ENCODE measurements at regions of chr7 and their contacts with region 1.

Region 1: DNA sequence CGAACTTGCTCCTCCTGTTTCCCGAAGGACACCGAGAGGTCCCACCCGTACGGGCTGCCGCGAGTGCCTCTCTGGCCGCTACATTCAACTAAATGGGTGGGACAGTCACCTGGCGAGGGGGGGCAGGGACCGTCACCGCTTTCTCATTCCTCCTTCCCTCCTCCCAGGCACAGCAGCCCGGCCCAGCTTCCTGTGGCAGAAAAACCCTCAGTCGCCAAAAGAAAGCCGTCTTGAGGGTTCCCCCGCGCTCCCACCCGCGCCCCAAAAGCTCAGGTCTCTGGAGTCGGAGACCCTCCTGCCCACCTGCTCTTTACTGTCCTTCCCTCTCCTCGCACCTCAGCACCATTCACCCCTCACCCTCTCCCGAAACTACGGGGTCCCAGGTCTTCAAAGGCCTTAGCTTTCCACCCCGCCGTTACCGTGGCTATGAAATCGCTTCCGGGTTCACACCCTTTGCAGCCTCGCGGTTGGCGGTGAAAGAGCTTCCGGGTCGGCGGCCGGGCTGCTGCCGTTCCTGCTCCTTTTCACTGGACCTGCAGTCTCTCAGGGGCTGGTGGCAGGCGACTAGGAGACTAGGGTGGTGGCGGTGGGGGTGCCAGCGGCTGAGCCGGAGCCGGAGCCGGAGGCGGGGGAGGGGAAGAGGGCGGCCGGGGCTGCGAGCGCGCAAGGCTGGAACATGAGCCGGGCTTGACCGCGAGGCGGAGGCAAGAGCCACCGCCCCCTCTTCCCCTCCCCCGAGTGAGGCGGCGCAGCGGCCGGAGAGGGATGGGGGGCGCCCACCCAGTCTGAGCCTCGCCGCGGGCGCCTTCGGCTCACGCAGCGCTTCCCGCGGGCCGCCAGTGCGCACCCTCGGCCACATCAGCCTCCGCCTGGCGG is at the starts of genes ANKIB1 and KRIT1:
- DNase-seq: peak; percentile 92
- ATAC-seq: peak; percentile 78
- H3K4me3 ChIP-seq: peak within 1 kb of the TSS; percentile 55 to 83 (median 81)
- H3K4me3 Mint-ChIP-seq: peak within 1 kb of the TSS; percentile 99
- H3K27ac ChIP-seq: peak within 1 kb of the TSS; percentile 84 to 97
- H3K27ac Mint-ChIP-seq: peak within 1 kb of the TSS; percentile 99
- H3K4me1 ChIP-seq: peaks cover 15 to 31% of the 10 kb centered on the region in 2 donors
- H3K4me1 Mint-ChIP-seq: peaks cover 39% of the 10 kb centered on the region
- H3K27me3 ChIP-seq: no peaks in the 10 kb centered on the region
- H3K27me3 Mint-ChIP-seq: no peaks in the 10 kb centered on the region
- CTCF ChIP-seq: peak; percentile 20
- total RNA-seq, gene ANKIB1: 76.7 and 77.5 TPM in 2 replicates
- total RNA-seq, gene KRIT1: 78.1 and 85.1 TPM in 2 replicates

Region 2: GRCh38 chr7:92134271-92135051 is 111.3 kb before region 1 on chr7 and contains the start of gene CYP51A1:
- CTCF ChIA-PET with region 1: no interaction called
- POLR2A ChIA-PET with region 1: interaction called, 15 read pairs
- intact Hi-C with region 1: loop called (anchors 1 kb)
- DNase-seq: peak; percentile 99
- ATAC-seq: peak; percentile 84
- H3K4me3 ChIP-seq: peak within 1 kb of the TSS; percentile 86 to 94 (median 90)
- H3K4me3 Mint-ChIP-seq: peak within 1 kb of the TSS; percentile 99
- H3K27ac ChIP-seq: peak within 1 kb of the TSS; percentile 94 to 98
- H3K27ac Mint-ChIP-seq: peak within 1 kb of the TSS; percentile 100
- H3K4me1 ChIP-seq: peaks cover 18 to 27% of the 10 kb centered on the region in 2 donors
- H3K4me1 Mint-ChIP-seq: peaks cover 39% of the 10 kb centered on the region
- H3K27me3 ChIP-seq: no peaks in the 10 kb centered on the region
- H3K27me3 Mint-ChIP-seq: no peaks in the 10 kb centered on the region
- CTCF ChIP-seq: no peak
- total RNA-seq, gene CYP51A1: 36.1 and 37.9 TPM in 2 replicates

Region 3: GRCh38 chr7:92150450-92151017 is 95.2 kb before region 1 on chr7:
- CTCF ChIA-PET with region 1: no interaction called
- POLR2A ChIA-PET with region 1: no interaction called
- intact Hi-C with region 1: no loop called
- DNase-seq: no peak
- ATAC-seq: no peak
- H3K4me3 ChIP-seq: no peak overlapping the region
- H3K4me3 Mint-ChIP-seq: no peak overlapping the region
- H3K27ac ChIP-seq: no peak overlapping the region
- H3K27ac Mint-ChIP-seq: no peak overlapping the region
- H3K4me1 ChIP-seq: no peaks in the 10 kb centered on the region
- H3K4me1 Mint-ChIP-seq: no peaks in the 10 kb centered on the region
- H3K27me3 ChIP-seq: peaks cover 0 to 2% (median 0%) of the 10 kb centered on the region in 4 experiments
- H3K27me3 Mint-ChIP-seq: peaks cover 5% of the 10 kb centered on the region
- CTCF ChIP-seq: no peak